Right ventricle myocardium inferior (tissue), 1 donor: ENCODE measurements at regions of chr10 and their contacts with region 1.

Region 1: DNA sequence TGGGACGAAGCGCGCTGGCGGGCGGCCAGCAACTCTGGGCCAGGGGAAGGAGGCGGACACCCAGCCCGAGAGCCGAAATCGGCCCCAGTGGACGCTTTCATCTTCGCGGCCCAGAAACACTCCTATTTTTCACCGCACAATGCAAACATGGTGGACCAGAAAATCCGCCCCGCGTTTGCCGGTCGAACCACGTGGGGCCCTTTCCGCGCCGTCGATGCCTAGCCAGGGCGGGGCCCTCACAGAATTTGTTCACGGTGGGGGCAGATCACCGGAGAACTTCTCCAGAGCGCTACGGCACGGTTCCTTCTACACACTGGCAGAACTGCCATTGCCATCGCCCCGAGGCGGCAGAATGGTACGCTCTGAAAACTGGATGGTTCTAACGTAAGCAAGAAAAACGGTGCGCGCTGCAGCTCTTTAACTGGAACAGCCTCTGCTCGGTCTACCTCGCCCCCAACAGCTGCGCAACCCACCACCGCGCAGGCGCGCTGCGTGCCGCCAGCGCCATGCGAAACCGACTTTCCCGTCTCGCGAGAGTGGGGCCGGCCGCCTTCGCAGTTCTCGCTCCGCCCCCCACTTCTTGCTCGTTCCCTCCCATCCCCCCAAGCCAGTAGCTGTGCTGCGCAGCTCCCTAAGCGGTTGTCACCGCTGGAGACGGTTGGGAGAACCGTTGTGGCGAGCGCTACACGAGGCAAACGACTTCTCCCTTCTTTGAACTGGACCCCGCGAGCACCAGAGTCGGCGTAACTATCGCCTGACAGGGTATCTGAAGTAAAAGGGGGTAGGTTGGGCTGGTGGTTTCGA is at the start of gene HNRNPH3:
- DNase-seq: peak; percentile 98
- ATAC-seq: peak; percentile 93
- total RNA-seq, gene HNRNPH3: 123 TPM

Region 2: GRCh38 chr10:67884313-67884841 is 447.3 kb before region 1 on chr10 and contains the start of gene SIRT1:
- intact Hi-C with region 1: loop called (anchors 2 kb)
- DNase-seq: peak; percentile 99
- ATAC-seq: peak; percentile 97
- total RNA-seq, gene SIRT1: 10.9 TPM

Region 3: DNA sequence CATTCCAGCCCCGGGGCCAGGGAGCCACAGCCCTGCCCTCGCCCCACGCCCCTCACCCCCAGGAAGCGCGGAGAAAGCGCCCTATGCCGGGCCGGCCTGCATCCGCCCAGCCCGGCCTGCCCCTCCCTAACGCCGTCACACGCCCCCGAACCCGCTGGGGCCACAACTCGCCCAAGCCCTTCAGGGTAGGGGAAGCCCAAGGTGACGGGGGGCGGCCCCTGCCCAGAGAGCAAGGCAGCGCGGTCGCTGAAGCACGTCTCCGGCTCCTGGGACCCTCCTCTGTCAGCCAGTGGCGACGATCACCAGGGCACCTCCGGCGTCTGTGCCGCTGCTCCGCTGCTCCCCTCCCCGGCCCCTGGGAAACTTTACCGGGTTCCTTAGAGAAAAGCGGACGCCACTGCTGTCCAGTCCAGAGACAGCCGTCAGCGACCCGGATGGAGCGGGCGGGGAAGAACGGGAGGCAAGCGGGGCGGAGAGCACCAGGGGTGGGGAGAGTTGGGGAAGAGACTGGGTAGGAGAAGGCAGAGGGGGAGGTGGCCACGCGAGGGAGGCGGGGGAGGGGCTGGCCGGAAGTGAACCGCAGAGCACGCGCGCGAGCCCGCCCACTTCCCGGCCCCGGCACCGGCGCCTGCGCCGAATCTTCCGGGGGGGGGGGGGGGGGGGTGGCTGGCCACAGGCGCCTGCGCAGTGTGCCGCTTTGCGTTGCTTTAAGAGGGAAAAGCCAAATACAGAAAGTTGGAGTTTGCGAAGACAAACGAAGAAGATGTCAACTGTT is 256.7 kb before region 1 on chr10 and contains the start of gene HERC4:
- intact Hi-C with region 1: loop called (anchors 5 kb)
- DNase-seq: peak; percentile 96
- ATAC-seq: peak; percentile 100
- total RNA-seq, gene HERC4: 25.5 TPM

Region 4: GRCh38 chr10:68397005-68397404 is 65.3 kb after region 1 on chr10:
- intact Hi-C with region 1: no loop called
- DNase-seq: no peak
- ATAC-seq: no peak